ENCODE measurements at regions of chr14 and their contacts with region 1.

Region 1: DNA sequence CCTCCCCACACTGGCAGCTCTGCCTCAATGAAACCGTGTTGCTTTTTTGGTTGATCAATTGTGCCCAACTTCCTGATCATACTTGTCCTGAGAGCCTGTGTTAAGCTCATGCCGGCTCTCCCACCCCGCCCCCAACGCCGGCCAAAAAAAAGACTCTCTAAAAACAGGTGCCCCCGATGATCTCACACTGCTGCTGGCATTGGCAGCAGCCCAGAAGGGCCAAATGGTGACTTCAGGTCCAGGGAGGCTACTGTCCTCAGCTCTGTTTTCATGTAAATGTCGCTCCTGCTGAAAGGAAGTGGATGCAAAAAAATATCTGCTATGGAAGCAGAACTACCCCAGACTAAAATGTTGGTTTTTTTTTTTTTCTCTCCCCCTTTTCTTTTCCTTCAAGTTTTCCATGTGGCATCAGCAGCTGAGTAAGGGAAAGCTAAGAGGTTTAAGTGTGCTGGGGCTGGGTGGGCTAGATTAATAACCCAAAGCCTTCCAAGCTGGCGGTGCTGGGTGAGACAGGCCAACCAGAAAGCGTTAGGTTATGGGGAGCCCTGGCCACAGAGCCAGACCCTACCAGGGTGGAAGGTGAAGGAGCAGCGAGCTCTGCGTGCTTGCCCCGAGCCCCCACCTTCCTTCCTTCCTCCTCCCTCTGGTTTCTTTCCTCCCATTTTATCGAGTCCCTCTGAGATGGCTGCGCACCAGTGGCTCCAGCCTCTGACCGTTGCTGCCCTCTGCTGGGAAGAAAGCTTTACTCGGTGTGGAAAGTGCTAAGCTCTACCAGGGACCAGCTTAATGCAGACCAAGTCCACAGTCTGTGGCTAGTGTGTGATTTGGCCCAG is 396.1 kb downstream of the NRXN3 start:
- DNase-seq: peak; percentile 90
- ATAC-seq: peak; percentile 95
- H3K4me3 Mint-ChIP-seq: peak overlapping the region; percentile 42
- H3K27ac Mint-ChIP-seq: no peak overlapping the region
- H3K4me1 Mint-ChIP-seq: peaks cover 11% of the 10 kb centered on the region
- H3K27me3 Mint-ChIP-seq: no peaks in the 10 kb centered on the region
- CTCF ChIP-seq: peak; percentile 43; the same call in 1 of the 2 replicates

Region 2: DNA sequence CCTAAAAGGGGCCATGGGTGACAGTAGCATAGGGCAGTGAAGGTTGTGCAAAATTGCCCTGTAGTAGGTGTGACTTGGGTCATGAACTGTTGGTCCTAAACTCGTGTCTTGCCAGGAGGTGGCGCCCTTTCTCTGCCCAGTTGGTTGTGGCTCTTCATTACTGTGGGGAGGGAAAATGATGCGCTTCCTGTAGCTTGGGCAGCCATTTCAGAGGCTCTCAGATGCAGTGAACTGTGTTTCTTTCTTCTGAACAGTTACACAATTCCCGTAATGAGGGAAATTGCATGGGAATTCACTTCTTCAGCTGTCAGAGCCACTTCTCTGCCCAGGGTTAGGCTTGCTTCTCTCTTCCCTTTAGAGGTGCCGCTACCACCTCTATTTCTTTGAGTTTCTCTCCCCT is 544.2 kb before region 1 on chr14:
- CTCF ChIA-PET with region 1: interaction called, 19 read pairs
- POLR2A ChIA-PET with region 1: interaction called, 4 read pairs
- DNase-seq: peak; percentile 89
- ATAC-seq: peak; percentile 98
- H3K4me3 Mint-ChIP-seq: no peak overlapping the region
- H3K27ac Mint-ChIP-seq: no peak overlapping the region
- H3K4me1 Mint-ChIP-seq: peaks cover 10% of the 10 kb centered on the region; the same call in 1 of the 2 replicates
- H3K27me3 Mint-ChIP-seq: no peaks in the 10 kb centered on the region
- CTCF ChIP-seq: peak; percentile 79

Region 3: DNA sequence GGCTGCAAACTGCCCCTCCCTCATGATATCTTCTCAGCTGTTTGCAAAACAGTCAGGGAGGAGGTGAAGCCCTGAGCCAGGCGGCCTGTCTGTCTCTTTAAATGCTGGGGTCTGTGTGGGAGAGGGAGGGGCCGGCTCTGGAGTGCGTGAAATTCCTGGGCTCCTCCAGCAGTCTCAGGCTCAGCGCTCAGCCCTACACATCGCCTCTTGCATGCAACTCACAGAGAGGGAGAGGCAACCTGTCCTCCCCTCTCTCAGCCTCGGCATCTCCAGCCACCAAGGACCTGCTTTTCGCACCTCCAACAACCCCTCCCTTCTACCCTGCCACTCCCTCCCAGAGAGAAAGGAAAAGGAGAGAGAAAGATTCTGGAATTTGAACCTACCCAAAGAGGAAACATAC is 396.0 kb before region 1 on chr14 and contains the start of gene NRXN3:
- CTCF ChIA-PET with region 1: interaction called, 22 read pairs
- POLR2A ChIA-PET with region 1: interaction called, 3 read pairs
- DNase-seq: peak; percentile 76
- ATAC-seq: peak; percentile 100
- H3K4me3 Mint-ChIP-seq: peak within 1 kb of the TSS; percentile 80
- H3K27ac Mint-ChIP-seq: peak within 1 kb of the TSS; percentile 82
- H3K4me1 Mint-ChIP-seq: peaks cover 27% of the 10 kb centered on the region
- H3K27me3 Mint-ChIP-seq: no peaks in the 10 kb centered on the region
- CTCF ChIP-seq: no peak
- total RNA-seq, gene NRXN3: 2.5 to 3.0 TPM (median 2.9 TPM) in 3 replicates

Region 4: GRCh38 chr14:78448164-78449094 is 117.8 kb before region 1 on chr14:
- CTCF ChIA-PET with region 1: interaction called, 88 read pairs
- POLR2A ChIA-PET with region 1: interaction called, 7 read pairs
- DNase-seq: peak; percentile 80
- ATAC-seq: peak; percentile 83
- H3K4me3 Mint-ChIP-seq: no peak overlapping the region
- H3K27ac Mint-ChIP-seq: no peak overlapping the region
- H3K4me1 Mint-ChIP-seq: peaks cover 8% of the 10 kb centered on the region
- H3K27me3 Mint-ChIP-seq: no peaks in the 10 kb centered on the region
- CTCF ChIP-seq: peak; percentile 79

Region 5: DNA sequence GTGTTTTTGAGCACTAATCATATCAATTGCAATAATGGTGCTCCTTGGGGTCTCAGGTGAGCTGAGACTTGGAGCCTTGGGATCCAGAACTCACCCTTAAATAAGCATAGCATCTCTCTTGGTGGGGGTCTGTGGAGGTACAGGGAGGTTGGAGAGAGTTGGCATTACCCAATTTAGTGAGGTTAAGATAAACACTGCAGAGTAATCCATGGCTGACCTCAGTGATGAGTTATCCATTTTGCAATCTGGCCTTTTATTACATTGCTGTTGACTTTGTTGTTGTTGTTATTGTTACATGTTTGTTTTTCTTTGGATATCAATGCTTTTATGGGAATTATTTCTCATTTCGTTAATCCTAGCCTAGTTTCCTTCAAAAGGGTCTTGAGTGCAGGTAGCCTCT is 22.8 kb before region 1 on chr14:
- CTCF ChIA-PET with region 1: interaction called, 25 read pairs
- POLR2A ChIA-PET with region 1: no interaction called
- DNase-seq: no peak
- ATAC-seq: no peak
- H3K4me3 Mint-ChIP-seq: no peak overlapping the region
- H3K27ac Mint-ChIP-seq: no peak overlapping the region
- H3K4me1 Mint-ChIP-seq: peaks cover 13% of the 10 kb centered on the region
- H3K27me3 Mint-ChIP-seq: no peaks in the 10 kb centered on the region; the same call in none of the 2 replicates
- CTCF ChIP-seq: no peak

Region 6: DNA sequence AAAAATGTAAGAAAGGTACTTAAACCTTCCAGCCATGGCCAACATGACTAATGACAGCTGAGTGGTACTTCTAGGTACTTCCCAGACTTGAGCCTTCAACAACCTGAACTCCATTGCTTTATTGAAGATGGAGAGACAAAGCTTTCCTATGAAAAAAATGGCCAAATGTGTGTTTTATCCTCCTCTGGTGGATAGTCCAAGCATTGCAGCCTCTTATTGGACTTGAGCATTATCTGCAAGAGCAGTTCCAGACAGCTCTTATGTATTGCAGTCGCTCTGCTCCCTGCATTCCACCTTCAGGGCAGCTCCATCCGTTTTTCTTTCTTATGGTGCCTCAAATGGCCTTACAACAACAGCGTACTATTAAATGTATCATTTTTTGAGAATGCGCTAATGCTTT is 192.1 kb after region 1 on chr14:
- CTCF ChIA-PET with region 1: interaction called, 15 read pairs
- POLR2A ChIA-PET with region 1: no interaction called
- DNase-seq: peak; percentile 16
- ATAC-seq: peak; percentile 86
- H3K4me3 Mint-ChIP-seq: no peak overlapping the region
- H3K27ac Mint-ChIP-seq: no peak overlapping the region
- H3K4me1 Mint-ChIP-seq: peaks cover 16% of the 10 kb centered on the region
- H3K27me3 Mint-ChIP-seq: no peaks in the 10 kb centered on the region
- CTCF ChIP-seq: peak; percentile 58; the same call in 1 of the 2 replicates